ENCODE measurements at regions of chr9 and their contacts with region 1.

Region 1: DNA sequence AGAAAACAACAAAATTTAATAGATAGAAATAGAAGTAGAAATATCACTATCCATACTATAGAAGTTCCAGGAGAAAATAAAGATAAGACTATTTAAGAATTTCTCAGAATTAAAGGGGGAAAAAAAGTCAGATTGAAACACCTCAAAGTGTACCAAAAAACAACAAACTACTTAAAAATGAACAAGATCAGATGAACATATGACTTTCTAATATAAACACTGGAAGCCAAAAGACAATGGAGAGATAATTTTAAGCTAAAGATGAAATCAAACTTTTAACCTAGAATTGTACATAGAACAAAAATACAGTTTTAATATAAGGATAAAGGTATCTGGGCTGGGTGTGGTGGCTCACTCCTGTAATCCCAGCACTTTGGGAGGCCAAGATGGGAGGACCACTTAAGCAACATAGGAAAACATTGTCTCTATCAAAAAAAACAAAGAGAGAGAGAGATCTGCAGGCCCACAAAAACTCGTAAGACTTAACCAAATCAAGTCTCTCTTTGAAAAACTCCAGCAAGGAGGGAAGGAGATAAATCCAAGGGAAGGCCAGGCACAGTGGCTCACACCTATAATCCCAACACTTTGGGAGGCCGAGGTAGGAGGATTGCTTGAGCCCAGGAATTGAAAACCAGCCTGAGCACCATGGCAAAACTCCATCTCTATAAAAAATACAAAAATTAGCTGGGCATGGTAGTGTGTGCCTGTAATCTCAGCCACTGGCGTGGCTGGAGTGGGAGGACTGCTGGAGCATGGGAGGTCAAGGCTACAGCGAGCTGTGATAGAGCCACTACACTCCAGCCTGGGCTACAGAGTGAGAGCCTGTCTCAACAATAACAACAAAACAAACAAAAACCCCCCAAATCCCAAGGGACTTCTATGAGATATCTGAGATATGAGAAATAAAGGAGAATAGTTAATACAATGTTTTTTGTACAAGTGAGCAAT is 32.4 kb downstream of the ABHD17B start:
- DNase-seq: no peak
- H3K4me3 Mint-ChIP-seq: no peak overlapping the region
- H3K27ac Mint-ChIP-seq: no peak overlapping the region
- H3K4me1 Mint-ChIP-seq: peaks cover 5% of the 10 kb centered on the region
- H3K27me3 Mint-ChIP-seq: no peaks in the 10 kb centered on the region

Region 2: DNA sequence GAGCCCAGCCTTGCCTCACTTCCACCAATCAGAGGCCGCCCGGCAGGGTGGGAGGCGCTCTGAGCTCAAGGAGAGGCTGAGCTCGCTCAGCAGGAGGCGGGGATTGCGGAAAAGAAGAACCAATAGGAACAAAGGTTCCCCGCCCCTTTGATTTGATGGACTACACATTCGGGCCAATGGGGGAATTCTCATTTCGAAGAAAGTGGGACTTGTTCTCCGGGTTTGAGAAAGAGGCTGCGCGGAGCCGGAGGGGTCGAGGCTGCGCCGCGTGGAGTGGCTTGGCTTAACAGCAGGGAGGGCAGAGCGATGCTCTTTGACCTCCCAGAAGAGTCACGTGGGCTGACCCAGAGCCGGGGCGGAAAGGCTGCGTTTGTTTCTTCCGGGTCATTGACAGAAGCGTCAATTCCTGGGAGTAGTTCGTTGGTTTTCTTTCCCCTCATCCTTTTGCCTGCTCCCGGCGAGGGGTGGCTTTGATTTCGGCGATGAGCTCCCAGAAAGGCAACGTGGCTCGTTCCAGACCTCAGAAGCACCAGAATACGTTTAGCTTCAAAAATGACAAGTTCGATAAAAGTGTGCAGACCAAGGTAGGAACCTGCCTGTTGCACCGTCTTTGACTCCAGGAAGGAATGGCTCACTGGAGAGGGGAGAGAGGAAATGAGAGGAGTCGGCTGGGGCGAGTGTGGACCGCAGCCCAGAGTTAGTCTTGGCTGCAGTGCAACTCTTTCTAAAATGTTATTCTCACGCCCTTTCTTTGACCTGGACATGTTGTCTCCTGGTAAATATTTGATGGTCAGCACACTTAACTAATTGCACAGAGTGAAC is 32.9 kb after region 1 on chr9 and contains the start of gene C9orf85:
- CTCF ChIA-PET with region 1: no interaction called
- POLR2A ChIA-PET with region 1: interaction called, 11 read pairs
- DNase-seq: peak; percentile 99
- H3K4me3 Mint-ChIP-seq: peak within 1 kb of the TSS; percentile 99
- H3K27ac Mint-ChIP-seq: peak within 1 kb of the TSS; percentile 97
- H3K4me1 Mint-ChIP-seq: peaks cover 62% of the 10 kb centered on the region
- H3K27me3 Mint-ChIP-seq: no peaks in the 10 kb centered on the region
- total RNA-seq, gene C9orf85: 11.0 to 11.6 TPM